HCT116 (cell line): ENCODE measurements at regions of chr11 and their contacts with region 1.

Region 1: GRCh38 chr11:236774-237767 is at the start of gene PSMD13:
- DNase-seq: peak; percentile 56
- ATAC-seq: peak; percentile 88
- H3K4me3 ChIP-seq: peak within 1 kb of the TSS; percentile 76 to 94
- H3K27ac ChIP-seq: peak within 1 kb of the TSS; percentile 92
- H3K4me1 ChIP-seq: peaks cover 6 to 20% of the 10 kb centered on the region in 2 experiments; a peak in 3 of 4 replicates
- H3K27me3 ChIP-seq: no peaks in the 10 kb centered on the region
- CTCF ChIP-seq: no peak
- POLR2A ChIP-seq: peak; percentile 7
- RAD21 ChIP-seq: no peak
- total RNA-seq, gene PSMD13: 179 TPM

Region 2: DNA sequence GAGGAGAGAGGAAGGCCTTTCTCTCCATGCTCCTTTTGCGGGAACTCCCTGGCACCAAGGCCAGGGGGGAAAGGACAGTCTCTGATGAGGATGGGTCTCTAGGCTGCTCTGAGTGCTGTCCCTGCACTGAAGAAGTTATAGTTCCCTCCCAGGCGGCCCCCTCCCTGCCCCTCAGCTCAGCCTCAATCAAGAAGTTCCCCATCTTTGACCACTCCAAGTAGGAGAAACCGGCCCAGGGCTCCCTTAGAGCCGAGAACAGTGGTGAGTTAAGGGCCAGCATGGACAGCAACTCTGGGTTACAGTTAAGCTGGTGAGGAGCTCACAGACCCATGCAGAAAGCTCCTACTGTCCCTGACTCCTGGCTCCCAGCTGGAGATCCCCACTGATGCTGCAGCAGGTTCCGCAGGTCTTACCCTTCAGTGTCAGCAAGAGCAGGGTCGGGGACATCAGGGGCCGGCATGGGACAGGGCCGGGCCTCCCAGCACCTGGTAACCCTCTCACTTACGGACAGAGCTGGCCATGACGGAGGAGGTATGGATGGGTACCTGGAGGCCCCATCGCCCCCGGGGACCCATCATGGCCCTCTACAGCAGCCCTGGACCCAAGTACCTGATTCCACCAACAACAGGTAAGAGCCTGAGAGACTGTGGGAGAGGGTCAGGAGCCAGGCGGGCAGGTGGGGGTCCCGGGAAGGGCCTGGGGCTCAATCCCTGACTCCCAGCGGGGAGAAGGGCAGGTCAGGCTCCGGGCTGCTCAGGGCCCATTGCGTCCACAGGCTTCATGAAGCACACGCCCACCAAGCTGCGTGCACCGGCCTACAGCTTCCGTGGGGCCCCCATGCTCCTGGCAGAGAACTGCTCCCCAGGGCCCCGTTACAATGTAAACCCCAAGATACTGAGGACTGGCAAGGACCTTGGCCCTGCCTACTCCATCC is 40.0 kb before region 1 on chr11:
- CTCF ChIA-PET with region 1: no interaction called
- POLR2A ChIA-PET with region 1: no interaction called
- RAD21 ChIA-PET with region 1: no interaction called
- intact Hi-C with region 1: no loop called
- DNase-seq: no peak
- ATAC-seq: no peak
- H3K4me3 ChIP-seq: no peak overlapping the region
- H3K27ac ChIP-seq: no peak overlapping the region
- H3K4me1 ChIP-seq: no peaks in the 10 kb centered on the region
- H3K27me3 ChIP-seq: no peaks in the 10 kb centered on the region
- CTCF ChIP-seq: no peak
- POLR2A ChIP-seq: no peak
- RAD21 ChIP-seq: no peak

Region 3: GRCh38 chr11:207208-207862 is 29.7 kb before region 1 on chr11 and contains the starts of genes BET1L and RIC8A:
- CTCF ChIA-PET with region 1: no interaction called
- POLR2A ChIA-PET with region 1: no interaction called
- RAD21 ChIA-PET with region 1: no interaction called
- intact Hi-C with region 1: loop called (anchors 1 kb)
- DNase-seq: peak; percentile 97
- ATAC-seq: peak; percentile 82
- H3K4me3 ChIP-seq: peak within 1 kb of the TSS; percentile 76 to 99
- H3K27ac ChIP-seq: peak within 1 kb of the TSS; percentile 94
- H3K4me1 ChIP-seq: peaks cover 16 to 24% of the 10 kb centered on the region in 2 experiments
- H3K27me3 ChIP-seq: no peaks in the 10 kb centered on the region
- CTCF ChIP-seq: no peak
- POLR2A ChIP-seq: peak; percentile 75
- RAD21 ChIP-seq: no peak
- total RNA-seq, gene BET1L: 49.1 TPM
- total RNA-seq, gene RIC8A: 75.2 TPM

Region 4: DNA sequence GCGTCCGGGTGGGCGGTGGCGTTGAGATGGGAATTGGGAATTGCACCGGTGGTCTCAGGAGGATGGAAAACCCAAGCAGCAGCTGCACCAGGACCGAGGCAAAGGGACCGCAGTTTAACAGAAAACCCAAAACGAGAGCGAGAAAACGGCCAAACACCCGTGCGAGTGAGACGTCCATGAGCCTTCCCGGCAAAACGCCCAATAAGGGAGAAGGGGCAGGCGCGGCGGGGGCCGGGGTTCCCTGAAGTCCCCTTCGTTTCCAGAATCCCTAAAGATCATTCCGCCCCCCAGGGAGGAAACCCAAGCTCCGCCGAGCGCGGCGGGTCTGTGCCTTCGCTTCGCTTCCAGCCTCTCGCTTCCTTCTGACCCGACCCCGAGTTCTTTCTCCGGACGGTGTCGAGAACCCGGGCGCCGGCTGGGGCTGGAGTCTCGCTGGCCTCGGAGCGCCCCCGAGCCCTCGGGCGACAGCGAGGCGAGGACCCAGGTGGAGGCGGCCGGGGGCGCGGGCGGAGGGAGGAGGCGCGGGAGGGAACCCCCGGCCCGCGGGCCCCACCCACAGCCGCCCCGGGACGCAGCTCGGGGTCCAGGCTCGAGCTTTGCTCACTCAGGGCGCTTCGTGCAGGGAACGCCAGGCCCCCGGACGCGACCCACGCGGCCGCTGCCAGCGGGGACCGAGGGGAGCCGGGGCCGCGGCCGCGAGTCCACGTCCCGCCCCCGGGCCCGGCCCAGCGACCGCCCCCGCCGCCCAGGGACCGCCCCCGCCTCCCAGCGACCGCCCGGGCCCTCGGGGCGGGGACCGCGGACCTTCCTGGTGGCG is 51.5 kb after region 1 on chr11 and contains the start of gene PGGHG:
- CTCF ChIA-PET with region 1: no interaction called
- POLR2A ChIA-PET with region 1: no interaction called
- RAD21 ChIA-PET with region 1: no interaction called
- intact Hi-C with region 1: loop called (anchors 5 kb)
- DNase-seq: no peak
- ATAC-seq: peak; percentile 90
- H3K4me3 ChIP-seq: peak within 1 kb of the TSS; percentile 59 to 72
- H3K27ac ChIP-seq: peak within 1 kb of the TSS; percentile 79; the same call in 1 of the 2 replicates
- H3K4me1 ChIP-seq: peaks cover 14 to 25% of the 10 kb centered on the region in 2 experiments
- H3K27me3 ChIP-seq: no peaks in the 10 kb centered on the region
- CTCF ChIP-seq: no peak
- POLR2A ChIP-seq: no peak
- RAD21 ChIP-seq: no peak
- total RNA-seq, gene PGGHG: 57.5 TPM

Region 5: GRCh38 chr11:335779-336658 is 98.9 kb after region 1 on chr11:
- CTCF ChIA-PET with region 1: no interaction called
- POLR2A ChIA-PET with region 1: no interaction called
- RAD21 ChIA-PET with region 1: no interaction called
- intact Hi-C with region 1: no loop called
- DNase-seq: no peak
- ATAC-seq: no peak
- H3K4me3 ChIP-seq: no peak overlapping the region
- H3K27ac ChIP-seq: no peak overlapping the region
- H3K4me1 ChIP-seq: no peaks in the 10 kb centered on the region
- H3K27me3 ChIP-seq: no peaks in the 10 kb centered on the region
- CTCF ChIP-seq: no peak
- POLR2A ChIP-seq: no peak
- RAD21 ChIP-seq: no peak

Region 6: GRCh38 chr11:848380-848931 is 611.4 kb after region 1 on chr11:
- CTCF ChIA-PET with region 1: no interaction called
- POLR2A ChIA-PET with region 1: no interaction called
- RAD21 ChIA-PET with region 1: no interaction called
- intact Hi-C with region 1: no loop called
- DNase-seq: no peak
- ATAC-seq: peak; percentile 50
- H3K4me3 ChIP-seq: no peak overlapping the region
- H3K27ac ChIP-seq: peak overlapping the region; percentile 0; the same call in 1 of the 2 replicates
- H3K4me1 ChIP-seq: peaks cover 17 to 39% of the 10 kb centered on the region in 2 experiments
- H3K27me3 ChIP-seq: no peaks in the 10 kb centered on the region
- CTCF ChIP-seq: peak in 2 of 3 experiments; percentile 76 to 94; a peak in 4 of 6 replicates
- POLR2A ChIP-seq: no peak
- RAD21 ChIP-seq: no peak